ENCODE measurements at regions of chr9 and their contacts with region 1.

Region 1: GRCh38 chr9:97598461-97599288 is 34.5 kb downstream of the TSTD2 start:
- DNase-seq: peak; percentile 61
- ATAC-seq: peak; percentile 98
- H3K4me3 ChIP-seq: 0 out of 2 replicates have a peak overlapping the region, but pooled peaks have one; percentile 15
- H3K27ac ChIP-seq: no peak overlapping the region
- H3K4me1 ChIP-seq: peaks cover 7% of the 10 kb centered on the region; the same call in 1 of the 2 replicates
- H3K27me3 ChIP-seq: no peaks in the 10 kb centered on the region
- CTCF ChIP-seq: peak; percentile 77 to 94 (median 88)
- EP300 ChIP-seq: no peak
- POLR2A ChIP-seq: no peak
- RAD21 ChIP-seq: peak; percentile 86

Region 2: DNA sequence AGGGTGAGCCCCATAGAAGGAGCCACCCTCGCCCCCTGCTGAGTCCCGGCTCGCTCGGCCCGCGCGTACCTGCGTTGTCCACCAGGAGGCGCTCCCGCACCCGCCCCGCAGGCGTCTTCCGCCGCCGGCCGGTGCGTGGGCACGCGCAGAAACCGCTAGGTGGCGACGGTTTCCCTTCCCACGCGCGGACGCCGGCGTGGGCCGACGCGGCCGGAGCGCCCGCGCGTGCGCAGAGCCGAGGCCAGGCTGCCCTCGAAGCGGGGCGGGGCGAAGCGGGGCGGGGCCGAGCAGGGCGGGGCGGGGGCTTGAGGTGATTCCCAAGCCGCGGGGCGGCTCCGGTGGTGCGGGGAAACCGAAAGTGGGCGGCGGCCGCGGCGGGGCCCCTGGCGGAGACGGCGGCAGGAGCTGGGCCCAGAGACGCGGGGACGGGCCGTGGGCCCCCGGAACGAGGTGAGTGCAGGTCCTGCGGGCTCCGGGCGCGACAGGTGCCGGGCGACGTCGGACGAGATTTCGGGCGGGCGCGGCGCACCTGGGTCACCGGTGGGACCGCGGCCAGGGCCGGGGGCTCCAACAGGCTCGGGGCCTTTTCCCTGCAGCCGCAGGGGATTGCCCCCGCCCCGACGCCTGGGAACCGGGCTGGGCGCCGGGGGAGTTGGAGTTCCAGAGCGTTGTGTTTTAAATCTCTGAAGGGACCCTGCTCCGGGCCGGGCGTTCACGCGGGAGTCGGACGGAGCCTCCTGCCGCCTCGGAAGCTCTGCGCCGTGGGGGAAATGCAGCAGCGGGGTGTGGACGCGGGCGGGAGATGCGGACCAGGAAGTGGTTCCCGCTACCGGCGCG is 186.7 kb before region 1 on chr9 and contains the start of gene TDRD7:
- CTCF ChIA-PET with region 1: interaction called, 41 read pairs
- POLR2A ChIA-PET with region 1: no interaction called
- RAD21 ChIA-PET with region 1: interaction called, 11 read pairs
- SMC1A ChIA-PET with region 1: interaction called, 15 read pairs
- in situ Hi-C with region 1: no loop called
- intact Hi-C with region 1: loop called (anchors 2 kb)
- DNase-seq: peak; percentile 50
- ATAC-seq: peak; percentile 85
- H3K4me3 ChIP-seq: peak within 1 kb of the TSS; percentile 86
- H3K27ac ChIP-seq: peak within 1 kb of the TSS; percentile 23
- H3K4me1 ChIP-seq: peaks cover 3% of the 10 kb centered on the region; the same call in 1 of the 2 replicates
- H3K27me3 ChIP-seq: no peaks in the 10 kb centered on the region; a peak in 1 of 4 replicates
- CTCF ChIP-seq: peak; percentile 96 to 100 (median 99); a peak in 5 of 6 replicates
- EP300 ChIP-seq: peak; percentile 16 to 49; a peak in 1 of 4 replicates
- POLR2A ChIP-seq: peak; percentile 69
- RAD21 ChIP-seq: peak; percentile 71
- polyA plus RNA-seq, gene TDRD7: 5.7 to 8.3 TPM

Region 3: DNA sequence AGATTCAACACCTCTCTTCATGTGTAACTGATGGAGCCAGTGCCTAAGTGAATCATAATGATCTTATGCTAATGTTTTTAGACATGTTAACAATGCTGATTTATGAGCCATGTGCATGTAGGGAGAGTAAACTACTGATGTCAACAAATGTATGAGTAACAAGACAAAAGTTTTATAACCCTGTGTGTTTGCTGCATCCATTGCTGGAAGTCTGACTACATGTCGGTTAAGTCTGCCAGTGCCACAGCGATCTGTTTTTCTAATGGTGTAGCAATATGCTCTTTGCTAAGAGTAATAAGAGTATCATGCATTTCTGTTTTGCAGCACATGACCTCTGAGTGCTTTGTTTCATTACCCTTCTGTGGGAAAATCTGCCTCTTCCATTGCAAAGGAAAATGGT is 123.6 kb before region 1 on chr9:
- CTCF ChIA-PET with region 1: interaction called, 573 read pairs
- POLR2A ChIA-PET with region 1: no interaction called
- RAD21 ChIA-PET with region 1: interaction called, 306 read pairs
- SMC1A ChIA-PET with region 1: interaction called, 377 read pairs
- in situ Hi-C with region 1: no loop called
- intact Hi-C with region 1: no loop called
- DNase-seq: no peak
- ATAC-seq: no peak
- H3K4me3 ChIP-seq: no peak overlapping the region
- H3K27ac ChIP-seq: no peak overlapping the region
- H3K4me1 ChIP-seq: peaks cover under 1% of the 10 kb centered on the region; the same call in 1 of the 2 replicates
- H3K27me3 ChIP-seq: no peaks in the 10 kb centered on the region
- CTCF ChIP-seq: no peak
- EP300 ChIP-seq: no peak
- POLR2A ChIP-seq: no peak
- RAD21 ChIP-seq: no peak

Region 4: GRCh38 chr9:97510797-97511761 is 87.6 kb before region 1 on chr9:
- CTCF ChIA-PET with region 1: interaction called, 34 read pairs
- POLR2A ChIA-PET with region 1: interaction called, 10 read pairs
- RAD21 ChIA-PET with region 1: interaction called, 19 read pairs
- SMC1A ChIA-PET with region 1: interaction called, 89 read pairs
- in situ Hi-C with region 1: no loop called
- intact Hi-C with region 1: loop called (anchors 10 kb)
- DNase-seq: peak; percentile 84
- ATAC-seq: peak; percentile 91
- H3K4me3 ChIP-seq: peak overlapping the region; percentile 25; the same call in 1 of the 2 replicates
- H3K27ac ChIP-seq: peak overlapping the region; percentile 87
- H3K4me1 ChIP-seq: peaks cover 44% of the 10 kb centered on the region
- H3K27me3 ChIP-seq: no peaks in the 10 kb centered on the region
- CTCF ChIP-seq: no peak
- EP300 ChIP-seq: peak; percentile 63 to 93
- POLR2A ChIP-seq: no peak
- RAD21 ChIP-seq: no peak

Region 5: DNA sequence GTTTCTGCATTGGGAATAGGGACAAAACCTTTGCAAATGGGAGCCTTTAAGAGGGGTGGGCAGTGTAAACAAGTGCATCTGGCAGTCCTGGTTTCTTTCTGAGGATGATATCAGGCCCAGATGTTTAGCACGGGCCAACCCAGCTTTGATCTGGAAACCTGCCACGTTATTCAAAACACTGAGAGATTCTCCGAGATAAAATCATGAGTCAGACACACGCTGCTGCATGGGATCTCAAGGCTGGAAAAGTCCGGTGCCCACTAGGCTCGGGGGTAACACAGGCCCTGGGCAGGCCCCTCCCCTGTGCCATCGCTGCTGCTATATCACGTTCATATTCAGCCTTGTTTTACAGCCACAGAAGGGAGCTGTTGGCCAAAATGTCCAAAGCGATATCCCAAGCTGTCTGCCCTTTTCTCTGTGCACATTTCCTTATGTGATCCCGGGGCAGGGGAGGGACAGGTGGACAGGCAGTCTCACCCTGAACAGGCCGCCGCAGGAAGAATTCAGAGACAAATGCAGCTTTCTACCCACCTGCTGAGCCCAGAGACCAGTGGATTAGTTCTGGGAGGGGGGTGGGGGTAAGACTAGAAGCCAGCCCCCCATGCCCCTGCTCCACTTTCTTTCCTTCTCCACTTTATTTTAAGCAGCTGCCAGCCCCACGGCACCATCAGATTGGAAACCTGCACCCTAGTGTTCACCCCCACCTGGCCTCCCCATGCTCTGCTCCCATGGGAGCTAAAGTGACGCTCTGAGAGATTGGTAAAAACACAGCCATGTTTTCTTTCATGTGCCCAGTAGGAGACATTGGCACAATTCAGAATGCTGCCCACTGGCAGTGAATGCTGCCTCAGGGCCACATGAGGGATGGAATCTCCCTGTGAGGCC is 34.1 kb before region 1 on chr9:
- CTCF ChIA-PET with region 1: interaction called, 38 read pairs
- POLR2A ChIA-PET with region 1: no interaction called
- RAD21 ChIA-PET with region 1: interaction called, 19 read pairs
- SMC1A ChIA-PET with region 1: interaction called, 15 read pairs
- in situ Hi-C with region 1: no loop called
- intact Hi-C with region 1: no loop called
- DNase-seq: no peak
- ATAC-seq: no peak
- H3K4me3 ChIP-seq: no peak overlapping the region
- H3K27ac ChIP-seq: no peak overlapping the region
- H3K4me1 ChIP-seq: peaks cover 14% of the 10 kb centered on the region
- H3K27me3 ChIP-seq: no peaks in the 10 kb centered on the region
- CTCF ChIP-seq: no peak
- EP300 ChIP-seq: no peak
- POLR2A ChIP-seq: no peak
- RAD21 ChIP-seq: no peak

Region 6: GRCh38 chr9:97632985-97633858 is 34.5 kb after region 1 on chr9 and contains the starts of genes NCBP1 and TSTD2:
- CTCF ChIA-PET with region 1: interaction called, 13 read pairs
- POLR2A ChIA-PET with region 1: no interaction called
- RAD21 ChIA-PET with region 1: interaction called, 9 read pairs
- SMC1A ChIA-PET with region 1: interaction called, 6 read pairs
- in situ Hi-C with region 1: no loop called
- intact Hi-C with region 1: no loop called
- DNase-seq: peak; percentile 92
- ATAC-seq: peak; percentile 90
- H3K4me3 ChIP-seq: peak within 1 kb of the TSS; percentile 96
- H3K27ac ChIP-seq: peak within 1 kb of the TSS; percentile 93
- H3K4me1 ChIP-seq: peaks cover 5% of the 10 kb centered on the region
- H3K27me3 ChIP-seq: no peaks in the 10 kb centered on the region
- CTCF ChIP-seq: no peak
- EP300 ChIP-seq: peak in 1 of 2 experiments; percentile 25; a peak in 1 of 4 replicates
- POLR2A ChIP-seq: peak; percentile 95
- RAD21 ChIP-seq: no peak
- polyA plus RNA-seq, gene NCBP1: 14.7 to 21.5 TPM
- polyA plus RNA-seq, gene TSTD2: 5.0 to 5.3 TPM

Measured in GM12878 (cell line).